Aorta (tissue), 5 donors: ENCODE measurements at regions of chr4 and their contacts with region 1.

Region 1: DNA sequence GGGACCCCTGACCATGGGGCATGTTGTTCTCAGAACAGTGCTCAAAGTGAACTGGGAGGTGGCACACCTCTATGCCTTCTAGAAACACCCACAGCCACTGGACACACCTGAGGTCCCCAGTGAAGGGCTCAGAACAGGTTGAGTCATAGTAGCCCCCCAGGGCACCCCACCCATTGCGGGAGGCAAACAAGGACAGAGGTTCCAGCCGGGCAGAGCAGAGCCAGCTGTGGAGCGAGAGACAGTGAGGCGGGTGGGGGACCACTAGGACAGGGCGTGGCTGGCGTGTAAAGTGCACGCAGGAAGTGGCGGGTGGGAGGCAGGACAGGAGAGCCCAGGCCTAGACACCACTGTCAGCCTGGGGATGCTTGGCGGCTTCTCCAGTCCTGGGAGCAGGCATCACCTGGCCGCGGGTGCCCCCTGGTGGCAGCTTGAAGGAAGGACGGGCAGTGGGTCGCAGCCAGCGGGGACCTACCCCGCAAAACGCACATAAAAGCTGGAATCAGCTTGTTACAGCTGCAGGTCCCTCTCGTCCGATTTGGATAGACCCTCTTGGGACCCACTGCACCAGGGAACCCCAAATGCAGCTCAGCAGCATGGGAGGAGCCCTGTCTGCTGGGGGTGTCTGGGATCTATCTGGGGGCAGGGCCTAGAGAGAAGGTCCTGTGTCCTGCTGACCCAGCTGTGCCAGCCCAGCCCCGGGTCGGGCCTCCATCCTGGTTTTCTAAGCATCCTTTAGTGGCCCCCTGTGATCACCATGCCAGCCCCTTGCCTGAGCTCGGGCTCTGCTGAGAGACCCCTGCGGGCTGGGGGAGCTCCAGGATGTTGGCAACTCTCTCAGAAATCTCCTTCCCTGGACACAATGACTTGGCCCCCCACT is 57.6 kb downstream of the WFS1 start:
- DNase-seq: peak; percentile 83 to 94
- ATAC-seq: peak; percentile 86
- H3K4me3 ChIP-seq: no peak overlapping the region
- H3K27ac ChIP-seq: no peak overlapping the region
- H3K4me1 ChIP-seq: no peaks in the 10 kb centered on the region
- H3K27me3 ChIP-seq: no peaks in the 10 kb centered on the region

Region 2: GRCh38 chr4:6250235-6250983 is 76.9 kb before region 1 on chr4:
- intact Hi-C with region 1: loop called (anchors 1 kb)
- DNase-seq: no peak
- ATAC-seq: no peak
- H3K4me3 ChIP-seq: no peak overlapping the region
- H3K27ac ChIP-seq: no peak overlapping the region
- H3K4me1 ChIP-seq: no peaks in the 10 kb centered on the region
- H3K27me3 ChIP-seq: no peaks in the 10 kb centered on the region

Region 3: GRCh38 chr4:6264225-6264540 is 63.1 kb before region 1 on chr4:
- intact Hi-C with region 1: loop called in 1 of 2 experiments (anchors 1 kb)
- DNase-seq: peak; percentile 62 to 75
- ATAC-seq: peak; percentile 44
- H3K4me3 ChIP-seq: no peak overlapping the region
- H3K27ac ChIP-seq: no peak overlapping the region
- H3K4me1 ChIP-seq: no peaks in the 10 kb centered on the region
- H3K27me3 ChIP-seq: no peaks in the 10 kb centered on the region

Region 4: GRCh38 chr4:6408263-6408662 is 81.0 kb after region 1 on chr4:
- intact Hi-C with region 1: no loop called
- DNase-seq: peak in 1 of 2 donors; percentile 4
- ATAC-seq: no peak
- H3K4me3 ChIP-seq: no peak overlapping the region
- H3K27ac ChIP-seq: no peak overlapping the region
- H3K4me1 ChIP-seq: no peaks in the 10 kb centered on the region
- H3K27me3 ChIP-seq: no peaks in the 10 kb centered on the region